BJ (cell line): ENCODE measurements at regions of chr13 and their contacts with region 1.

Region 1: DNA sequence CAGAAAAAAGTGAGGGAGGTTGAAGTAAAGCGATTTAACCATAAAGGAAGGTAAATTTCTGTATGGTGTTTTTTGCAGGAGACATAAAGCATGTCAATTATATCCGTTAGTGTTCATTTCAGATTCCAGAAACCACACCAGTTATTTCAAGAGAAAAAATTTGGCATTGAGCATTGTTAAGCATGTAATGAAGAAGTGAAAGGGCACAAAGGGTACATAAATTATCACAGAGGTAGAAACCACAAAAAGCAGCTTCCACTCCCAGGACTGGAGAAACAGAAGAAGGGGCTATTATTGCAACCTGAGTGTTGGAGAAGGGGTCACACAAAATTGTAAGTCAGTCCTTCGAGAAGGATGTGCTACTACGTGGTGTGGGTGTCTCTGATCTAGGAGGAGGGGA is 72.2 kb upstream of the DACH1 start:
- DNase-seq: no peak
- H3K4me3 ChIP-seq: no peak overlapping the region
- H3K27me3 ChIP-seq: no peaks in the 10 kb centered on the region
- CTCF ChIP-seq: no peak

Region 2: GRCh38 chr13:72716776-72717175 is 777.6 kb after region 1 on chr13:
- CTCF ChIA-PET with region 1: no interaction called
- POLR2A ChIA-PET with region 1: no interaction called
- DNase-seq: no peak
- H3K4me3 ChIP-seq: no peak overlapping the region
- H3K27me3 ChIP-seq: no peaks in the 10 kb centered on the region
- CTCF ChIP-seq: no peak

Region 3: DNA sequence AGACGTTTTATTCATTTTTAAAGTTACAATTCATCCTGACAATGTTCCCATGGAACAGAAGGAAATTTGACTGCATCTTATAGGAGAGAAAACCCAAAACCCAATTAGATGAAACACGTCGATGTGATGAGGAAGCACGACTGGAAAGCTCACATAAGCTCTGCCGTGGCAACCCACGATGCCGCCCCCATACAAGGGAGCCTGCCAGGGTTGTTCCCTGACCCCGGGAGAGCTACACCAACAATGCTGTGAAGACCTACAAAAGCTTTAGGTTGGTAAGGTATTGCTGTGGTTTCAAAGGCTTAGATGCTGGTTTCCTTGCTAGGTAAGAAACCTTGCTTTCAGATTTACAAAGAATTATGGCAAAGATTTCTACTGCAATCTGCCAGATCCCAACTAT is 1801.9 kb after region 1 on chr13:
- CTCF ChIA-PET with region 1: no interaction called
- POLR2A ChIA-PET with region 1: interaction called, 14 read pairs
- DNase-seq: no peak
- H3K4me3 ChIP-seq: no peak overlapping the region
- H3K27me3 ChIP-seq: no peaks in the 10 kb centered on the region
- CTCF ChIP-seq: no peak